IMR-90 (cell line): ENCODE measurements at regions of chr2 and their contacts with region 1.

Region 1: GRCh38 chr2:103161456-103162289 is 399.8 kb downstream of the TMEM182 start:
- DNase-seq: peak; percentile 30
- ATAC-seq: no peak
- H3K4me3 ChIP-seq: no peak overlapping the region
- H3K27ac ChIP-seq: no peak overlapping the region
- H3K4me1 ChIP-seq: no peaks in the 10 kb centered on the region
- H3K27me3 ChIP-seq: no peaks in the 10 kb centered on the region
- CTCF ChIP-seq: peak; percentile 77
- POLR2A ChIP-seq: no peak
- RAD21 ChIP-seq: peak; percentile 71

Region 2: GRCh38 chr2:103110234-103110633 is 51.4 kb before region 1 on chr2:
- CTCF ChIA-PET with region 1: no interaction called
- POLR2A ChIA-PET with region 1: no interaction called
- dilution Hi-C with region 1: no loop called
- in situ Hi-C with region 1: no loop called
- intact Hi-C with region 1: no loop called
- DNase-seq: no peak
- ATAC-seq: no peak
- H3K4me3 ChIP-seq: no peak overlapping the region
- H3K27ac ChIP-seq: no peak overlapping the region
- H3K4me1 ChIP-seq: no peaks in the 10 kb centered on the region
- H3K27me3 ChIP-seq: no peaks in the 10 kb centered on the region
- CTCF ChIP-seq: no peak
- POLR2A ChIP-seq: no peak
- RAD21 ChIP-seq: no peak

Region 3: DNA sequence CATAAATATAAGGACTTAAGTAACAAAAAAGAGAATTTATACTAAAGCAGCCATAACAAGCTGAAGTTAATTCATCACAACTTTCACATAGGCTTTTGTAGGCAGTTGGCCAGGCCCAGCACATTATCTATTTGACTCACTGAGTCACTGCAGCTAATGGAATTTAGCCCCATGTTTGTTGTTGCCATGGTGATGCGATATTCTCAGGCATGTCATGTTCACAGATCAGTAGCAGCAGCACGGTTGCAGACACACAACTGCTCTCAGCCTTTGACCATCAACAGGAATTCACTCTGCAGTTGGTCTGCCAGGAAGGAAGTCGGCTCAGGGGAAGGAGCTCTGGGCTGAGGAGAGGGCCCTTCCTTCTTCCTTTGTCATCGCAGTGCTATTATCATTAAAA is 239.9 kb after region 1 on chr2:
- CTCF ChIA-PET with region 1: no interaction called
- POLR2A ChIA-PET with region 1: no interaction called
- dilution Hi-C with region 1: no loop called
- in situ Hi-C with region 1: no loop called
- intact Hi-C with region 1: no loop called
- DNase-seq: no peak
- ATAC-seq: no peak
- H3K4me3 ChIP-seq: no peak overlapping the region
- H3K27ac ChIP-seq: no peak overlapping the region
- H3K4me1 ChIP-seq: no peaks in the 10 kb centered on the region
- H3K27me3 ChIP-seq: no peaks in the 10 kb centered on the region
- CTCF ChIP-seq: no peak
- POLR2A ChIP-seq: no peak
- RAD21 ChIP-seq: no peak

Region 4: DNA sequence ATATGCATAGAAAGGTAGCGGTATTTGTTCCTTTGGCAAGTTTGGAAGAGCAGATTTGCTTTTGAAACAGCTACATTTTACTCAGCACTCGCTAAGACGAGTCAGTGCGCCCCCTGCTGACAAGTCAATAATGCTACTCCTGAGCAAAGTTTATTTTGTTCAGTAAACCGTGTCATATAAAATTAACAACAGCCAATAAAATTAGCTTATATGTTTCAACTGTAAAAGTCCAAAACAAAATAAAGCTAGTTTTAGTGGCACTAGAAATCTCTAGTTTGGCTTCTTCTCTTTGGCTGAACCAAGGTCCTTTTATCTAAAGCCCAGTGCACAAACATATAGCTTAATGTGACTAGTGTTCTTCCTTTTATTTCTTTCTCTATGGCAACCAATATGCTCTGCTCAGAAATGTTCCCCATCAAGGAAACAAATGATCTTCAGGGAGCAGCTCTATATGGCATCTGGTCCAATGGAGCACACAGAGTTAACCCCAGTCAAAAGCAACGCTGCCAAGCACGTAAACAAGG is 1688.0 kb after region 1 on chr2:
- CTCF ChIA-PET with region 1: interaction called, 12 read pairs
- POLR2A ChIA-PET with region 1: no interaction called
- dilution Hi-C with region 1: no loop called
- in situ Hi-C with region 1: no loop called
- intact Hi-C with region 1: no loop called
- DNase-seq: peak; percentile 45
- ATAC-seq: peak; percentile 77
- H3K4me3 ChIP-seq: no peak overlapping the region
- H3K27ac ChIP-seq: no peak overlapping the region
- H3K4me1 ChIP-seq: no peaks in the 10 kb centered on the region
- H3K27me3 ChIP-seq: peaks cover 75% of the 10 kb centered on the region
- CTCF ChIP-seq: peak; percentile 68
- POLR2A ChIP-seq: no peak
- RAD21 ChIP-seq: peak; percentile 46

Region 5: GRCh38 chr2:104889291-104889959 is 1727.8 kb after region 1 on chr2:
- CTCF ChIA-PET with region 1: no interaction called
- POLR2A ChIA-PET with region 1: no interaction called
- dilution Hi-C with region 1: no loop called
- in situ Hi-C with region 1: loop called (anchors 25 kb)
- intact Hi-C with region 1: no loop called
- DNase-seq: no peak
- ATAC-seq: no peak
- H3K4me3 ChIP-seq: no peak overlapping the region
- H3K27ac ChIP-seq: no peak overlapping the region
- H3K4me1 ChIP-seq: no peaks in the 10 kb centered on the region
- H3K27me3 ChIP-seq: no peaks in the 10 kb centered on the region
- CTCF ChIP-seq: no peak
- POLR2A ChIP-seq: no peak
- RAD21 ChIP-seq: no peak